Activated CD4-positive, alpha-beta T cell treated with anti-CD3 and anti-CD28 coated beads for 36 hours (primary cell): ENCODE measurements at regions of chr14 and their contacts with region 1.

Region 1: GRCh38 chr14:100056964-100057795 is 8.0 kb upstream of the EVL start:
- DNase-seq: peak; percentile 24
- ATAC-seq: peak; percentile 37
- H3K4me3 Mint-ChIP-seq: peak overlapping the region; percentile 18
- H3K27ac Mint-ChIP-seq: peak overlapping the region; percentile 81
- H3K4me1 Mint-ChIP-seq: peaks cover 58% of the 10 kb centered on the region
- H3K27me3 Mint-ChIP-seq: no peaks in the 10 kb centered on the region

Region 2: DNA sequence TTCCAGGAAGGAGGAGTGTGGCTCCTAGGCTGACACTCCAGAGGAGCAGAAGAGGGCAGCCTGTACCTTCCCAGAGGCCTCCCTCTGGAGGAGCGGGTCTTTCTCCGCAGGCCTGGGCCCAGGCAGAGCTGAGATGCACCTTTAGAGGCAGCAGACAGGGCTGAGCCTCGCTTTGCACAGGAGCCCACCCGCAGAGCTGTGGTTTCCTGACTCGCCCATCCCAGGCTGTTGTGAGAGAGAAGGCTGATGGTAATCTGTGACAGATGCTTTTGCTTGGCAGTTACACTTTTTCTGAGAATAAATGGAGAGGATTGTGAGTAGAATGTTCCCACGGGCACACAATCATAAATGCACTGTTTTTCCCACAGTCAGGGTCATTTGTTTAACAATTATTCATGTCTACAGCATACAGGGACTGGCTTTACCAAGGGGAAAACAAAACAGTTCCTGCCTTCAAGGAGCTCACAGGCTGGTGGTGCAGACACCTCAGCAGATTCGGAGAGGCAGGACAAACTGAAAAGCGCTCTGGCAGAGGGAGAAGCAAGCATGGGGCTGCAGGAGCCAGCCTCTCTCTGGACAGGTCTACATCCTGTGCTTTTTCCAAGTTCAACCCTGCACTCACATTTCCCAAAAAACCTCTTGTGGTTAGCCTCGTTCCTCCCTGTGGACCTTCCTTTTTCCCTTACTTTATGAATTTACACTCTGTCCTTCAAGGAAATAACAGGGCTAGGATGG is 22.0 kb after region 1 on chr14:
- CTCF ChIA-PET with region 1: interaction called, 231 read pairs
- POLR2A ChIA-PET with region 1: interaction called, 3 read pairs
- intact Hi-C with region 1: no loop called
- DNase-seq: peak; percentile 87
- ATAC-seq: peak; percentile 50
- H3K4me3 Mint-ChIP-seq: peak overlapping the region; percentile 57
- H3K27ac Mint-ChIP-seq: peak overlapping the region; percentile 91
- H3K4me1 Mint-ChIP-seq: peaks cover 97% of the 10 kb centered on the region
- H3K27me3 Mint-ChIP-seq: no peaks in the 10 kb centered on the region

Region 3: GRCh38 chr14:100155042-100155846 is 98.1 kb after region 1 on chr14:
- CTCF ChIA-PET with region 1: interaction called, 3 read pairs
- POLR2A ChIA-PET with region 1: no interaction called
- intact Hi-C with region 1: loop called in 1 of 2 experiments (anchors 2 kb)
- DNase-seq: peak; percentile 75
- ATAC-seq: no peak
- H3K4me3 Mint-ChIP-seq: no peak overlapping the region
- H3K27ac Mint-ChIP-seq: no peak overlapping the region
- H3K4me1 Mint-ChIP-seq: peaks cover 6% of the 10 kb centered on the region
- H3K27me3 Mint-ChIP-seq: peaks cover 15% of the 10 kb centered on the region